ENCODE measurements at regions of chr1 and their contacts with region 1.

Region 1: GRCh38 chr1:199684686-199685273 is 342.7 kb upstream of the NR5A2 start:
- DNase-seq: peak in 1 of 2 donors; percentile 80
- H3K4me3 ChIP-seq: no peak overlapping the region
- H3K27ac ChIP-seq: no peak overlapping the region
- H3K4me1 ChIP-seq: no peaks in the 10 kb centered on the region
- H3K27me3 ChIP-seq: peaks cover 0 to 4% (median 0%) of the 10 kb centered on the region in 3 donors
- CTCF ChIP-seq: peak in 5 of 7 experiments; percentile 45 to 62 (median 50)
- EP300 ChIP-seq: no peak
- POLR2A ChIP-seq: no peak

Region 2: GRCh38 chr1:198416296-198416695 is 1268.5 kb before region 1 on chr1:
- intact Hi-C with region 1: no loop called
- DNase-seq: no peak
- H3K4me3 ChIP-seq: no peak overlapping the region
- H3K27ac ChIP-seq: no peak overlapping the region
- H3K4me1 ChIP-seq: no peaks in the 10 kb centered on the region
- H3K27me3 ChIP-seq: peaks cover 0 to 8% (median 0%) of the 10 kb centered on the region in 3 donors
- CTCF ChIP-seq: no peak
- EP300 ChIP-seq: no peak
- POLR2A ChIP-seq: no peak

Region 3: DNA sequence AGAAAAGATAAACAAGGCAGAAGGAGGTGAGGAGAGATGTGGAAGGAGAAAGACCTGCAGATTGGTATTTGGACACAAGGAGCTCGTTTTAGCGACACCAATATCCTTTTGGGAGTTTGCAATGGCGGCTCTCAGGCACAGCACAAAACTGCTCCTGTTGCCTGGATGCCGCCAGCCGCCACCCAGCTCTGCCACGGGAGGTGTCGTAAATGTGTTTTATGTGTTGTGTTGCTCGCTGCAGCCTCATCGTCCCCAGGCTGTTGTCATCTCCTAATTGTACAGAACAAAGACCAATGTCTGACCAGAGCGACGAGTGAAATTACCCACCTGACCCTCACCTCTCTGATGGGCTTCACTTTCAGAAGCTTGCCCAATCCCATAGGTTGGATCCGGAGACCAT is 821.7 kb after region 1 on chr1:
- intact Hi-C with region 1: loop called (anchors 10 kb)
- DNase-seq: no peak
- H3K4me3 ChIP-seq: no peak overlapping the region
- H3K27ac ChIP-seq: no peak overlapping the region
- H3K4me1 ChIP-seq: no peaks in the 10 kb centered on the region
- H3K27me3 ChIP-seq: peaks cover 0 to 16% (median 0%) of the 10 kb centered on the region in 3 donors
- CTCF ChIP-seq: no peak
- EP300 ChIP-seq: no peak
- POLR2A ChIP-seq: no peak